Dorsolateral prefrontal cortex (tissue), 120 donors: ENCODE measurements at regions of chr2 and their contacts with region 1.

Region 1: DNA sequence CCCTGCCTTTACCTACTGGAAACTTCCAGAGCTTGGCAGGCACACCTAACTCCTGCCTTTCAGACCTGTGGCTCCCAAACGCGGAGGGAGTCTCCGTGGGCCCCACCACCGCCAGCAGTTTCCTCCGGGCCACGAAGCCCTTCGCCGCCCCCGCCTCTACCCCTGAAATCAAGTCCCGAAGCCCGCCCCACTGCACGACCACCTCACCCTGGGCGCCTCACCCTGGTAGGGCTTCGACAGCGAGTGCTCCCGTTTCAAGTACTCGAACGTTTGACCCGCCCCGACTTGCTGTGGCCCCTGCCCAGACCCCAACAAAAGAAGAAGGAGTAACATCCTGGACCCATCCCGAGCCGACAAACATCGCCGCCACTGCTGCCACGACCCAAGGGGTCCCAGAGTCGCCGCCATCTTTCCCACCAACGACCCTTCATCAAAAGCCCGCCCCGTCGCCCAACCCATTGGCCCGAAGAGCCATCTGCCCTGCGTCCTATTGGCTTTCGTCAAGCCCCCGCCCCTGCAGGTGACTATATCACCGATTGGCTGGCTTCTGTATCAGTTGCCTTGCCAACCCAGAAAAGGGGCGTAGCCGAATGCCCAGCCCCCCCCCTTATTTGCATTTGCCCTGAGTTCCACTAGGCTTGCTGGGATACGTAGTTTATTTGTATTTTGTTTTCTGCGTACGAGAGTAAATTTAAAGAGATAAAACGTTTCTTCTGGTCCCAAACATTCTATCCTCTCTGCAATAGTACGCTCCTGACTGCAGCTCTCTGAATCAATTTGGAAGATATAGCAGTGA is at the start of gene LMAN2L:
- DNase-seq: peak; percentile 95 to 100 (median 98)
- H3K4me3 ChIP-seq: peak within 1 kb of the TSS; percentile 61 to 99 (median 84)
- H3K27ac ChIP-seq: peak within 1 kb of the TSS in 56 of 59 donors; percentile 41 to 91 (median 76)
- H3K27me3 ChIP-seq: no peaks in the 10 kb centered on the region
- CTCF ChIP-seq: peak in 29 of 56 donors; percentile 7 to 52 (median 30)
- total RNA-seq, gene LMAN2L: 10.1 to 30.4 (median 15.9) TPM

Region 2: DNA sequence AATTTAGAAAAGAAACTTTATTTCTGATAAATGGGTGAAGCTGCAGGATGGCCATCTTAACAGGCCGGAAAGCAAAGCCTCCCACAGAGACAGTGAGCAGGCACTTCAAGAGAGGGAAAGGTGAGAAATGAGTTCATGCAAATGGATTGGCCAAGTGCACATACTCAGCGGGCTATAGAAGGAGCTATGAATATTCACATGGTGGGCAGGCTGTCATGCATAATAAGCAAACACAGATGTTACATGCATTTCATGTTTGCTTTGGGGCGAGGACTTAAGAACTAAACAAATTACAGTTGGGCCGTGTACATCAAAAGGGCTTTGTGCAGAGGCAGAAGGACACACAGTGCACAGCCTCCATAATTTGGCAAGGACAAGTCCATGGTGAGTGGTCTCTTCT is 1784.1 kb before region 1 on chr2:
- intact Hi-C with region 1: no loop called
- DNase-seq: no peak
- H3K4me3 ChIP-seq: no peak overlapping the region
- H3K27ac ChIP-seq: no peak overlapping the region
- H3K27me3 ChIP-seq: peaks cover 0 to 28% (median 3%) of the 10 kb centered on the region in 45 donors
- CTCF ChIP-seq: no peak

Region 3: GRCh38 chr2:96536445-96537065 is 203.3 kb before region 1 on chr2 and contains the start of gene ARID5A:
- intact Hi-C with region 1: loop called in 1 of 2 experiments (anchors 10 kb)
- DNase-seq: peak; percentile 87 to 95 (median 93)
- H3K4me3 ChIP-seq: peak within 1 kb of the TSS; percentile 66 to 98 (median 89)
- H3K27ac ChIP-seq: peak within 1 kb of the TSS; percentile 51 to 97 (median 90)
- H3K27me3 ChIP-seq: no peaks in the 10 kb centered on the region
- CTCF ChIP-seq: peak; percentile 26 to 71 (median 55)
- total RNA-seq, gene ARID5A: 9.3 to 61.4 (median 19.7) TPM

Region 4: GRCh38 chr2:96638144-96639121 is 101.4 kb before region 1 on chr2 and contains the start of gene KANSL3:
- intact Hi-C with region 1: loop called (anchors 2 to 5 kb)
- DNase-seq: peak; percentile 73 to 92 (median 82)
- H3K4me3 ChIP-seq: peak within 1 kb of the TSS; percentile 57 to 95 (median 83)
- H3K27ac ChIP-seq: peak within 1 kb of the TSS in 56 of 59 donors; percentile 18 to 95 (median 84)
- H3K27me3 ChIP-seq: no peaks in the 10 kb centered on the region
- CTCF ChIP-seq: peak in 31 of 56 donors; percentile 6 to 58 (median 26)
- total RNA-seq, gene KANSL3: 39.7 to 81.1 (median 55.0) TPM

Region 5: GRCh38 chr2:96669665-96670091 is 70.2 kb before region 1 on chr2:
- intact Hi-C with region 1: no loop called
- DNase-seq: no peak
- H3K4me3 ChIP-seq: no peak overlapping the region
- H3K27ac ChIP-seq: no peak overlapping the region
- H3K27me3 ChIP-seq: no peaks in the 10 kb centered on the region
- CTCF ChIP-seq: no peak

Region 6: DNA sequence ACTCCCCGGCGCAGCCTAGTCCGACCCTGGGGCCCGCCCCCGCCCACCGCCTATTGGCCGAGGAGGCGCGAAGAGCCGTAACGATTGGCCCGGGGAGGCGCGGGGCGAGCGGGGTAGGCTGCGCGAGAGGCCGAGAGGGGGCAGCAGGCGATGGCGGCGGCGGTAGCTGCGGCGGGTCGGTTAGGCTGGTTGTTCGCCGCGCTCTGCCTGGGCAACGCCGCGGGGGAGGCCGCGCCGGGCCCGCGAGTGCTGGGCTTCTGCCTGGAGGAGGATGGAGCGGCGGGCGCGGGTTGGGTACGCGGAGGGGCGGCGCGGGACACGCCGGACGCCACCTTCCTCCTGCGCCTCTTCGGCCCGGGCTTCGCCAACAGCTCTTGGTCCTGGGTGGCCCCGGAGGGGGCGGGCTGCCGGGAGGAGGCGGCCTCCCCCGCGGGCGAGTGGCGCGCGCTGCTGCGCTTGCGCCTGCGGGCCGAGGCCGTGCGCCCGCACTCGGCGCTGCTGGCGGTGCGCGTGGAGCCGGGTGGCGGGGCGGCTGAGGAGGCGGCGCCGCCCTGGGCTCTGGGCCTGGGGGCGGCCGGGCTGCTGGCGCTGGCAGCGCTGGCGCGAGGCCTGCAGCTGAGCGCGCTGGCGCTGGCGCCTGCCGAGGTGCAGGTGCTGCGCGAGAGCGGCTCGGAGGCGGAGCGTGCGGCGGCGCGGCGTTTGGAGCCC is 76.5 kb after region 1 on chr2 and contains the start of gene CNNM3:
- intact Hi-C with region 1: loop called in 1 of 2 experiments (anchors 2 kb)
- DNase-seq: peak; percentile 89 to 98 (median 96)
- H3K4me3 ChIP-seq: peak within 1 kb of the TSS; percentile 62 to 94 (median 82)
- H3K27ac ChIP-seq: peak within 1 kb of the TSS; percentile 92 to 99 (median 98)
- H3K27me3 ChIP-seq: no peaks in the 10 kb centered on the region
- CTCF ChIP-seq: peak in 55 of 56 donors; percentile 23 to 80 (median 60)
- total RNA-seq, gene CNNM3: 15.1 to 52.1 (median 34.2) TPM